Heart left ventricle (tissue), 16 donors: ENCODE measurements at regions of chr1 and their contacts with region 1.

Region 1: GRCh38 chr1:221741711-221742554 is at the start of gene DUSP10:
- DNase-seq: peak; percentile 98 to 99 (median 99)
- ATAC-seq: peak; percentile 95 to 98 (median 97)
- H3K4me3 ChIP-seq: peak within 1 kb of the TSS; percentile 49 to 90 (median 76)
- H3K27ac ChIP-seq: peak within 1 kb of the TSS; percentile 95 to 100 (median 98)
- H3K4me1 ChIP-seq: peaks cover 0 to 37% (median 9%) of the 10 kb centered on the region in 12 donors
- H3K27me3 ChIP-seq: no peaks in the 10 kb centered on the region
- CTCF ChIP-seq: no peak
- POLR2A ChIP-seq: peak in 1 of 2 donors; percentile 82
- total RNA-seq, gene DUSP10: 2.8 to 7.1 (median 4.4) TPM

Region 2: GRCh38 chr1:220873868-220874655 is 867.9 kb before region 1 on chr1:
- intact Hi-C with region 1: loop called in 1 of 10 experiments (anchors 5 kb)
- DNase-seq: peak in 3 of 5 donors; percentile 63 to 72 (median 66)
- ATAC-seq: peak in 3 of 4 donors; percentile 27 to 43 (median 37)
- H3K4me3 ChIP-seq: no peak overlapping the region
- H3K27ac ChIP-seq: peak overlapping the region in 4 of 12 donors; percentile 13 to 97 (median 42)
- H3K4me1 ChIP-seq: peaks cover 0 to 47% (median 29%) of the 10 kb centered on the region in 12 donors
- H3K27me3 ChIP-seq: peaks cover 0 to 7% (median 0%) of the 10 kb centered on the region in 9 donors
- CTCF ChIP-seq: peak; percentile 53 to 87 (median 76)
- POLR2A ChIP-seq: no peak

Region 3: DNA sequence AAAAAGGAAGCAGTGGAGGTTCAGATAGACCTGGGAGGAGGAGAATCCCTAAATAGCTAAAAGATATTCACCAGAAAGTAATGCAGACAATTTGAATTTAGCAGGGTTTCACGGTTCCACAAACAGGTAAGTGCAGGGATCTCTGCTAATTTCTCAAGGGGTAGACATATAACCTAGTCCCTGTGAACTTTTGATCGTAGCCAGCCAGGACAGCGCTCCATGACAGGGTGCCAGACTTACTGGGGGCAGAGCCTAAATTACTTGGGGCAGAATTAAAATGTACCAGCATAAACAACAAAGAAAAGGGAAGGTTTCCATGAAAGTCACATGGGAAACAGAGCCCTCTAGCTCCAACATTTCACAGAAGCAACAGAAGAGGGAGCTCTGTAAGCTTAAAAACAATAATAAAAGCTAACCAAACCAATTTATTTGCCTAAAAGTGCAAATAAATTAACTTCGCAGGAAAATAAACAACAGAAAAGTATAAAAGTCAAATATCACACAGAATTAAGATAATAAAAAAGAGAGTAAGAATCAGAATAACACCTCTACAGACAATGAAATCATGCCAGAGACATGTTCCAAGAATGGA is 198.3 kb before region 1 on chr1:
- intact Hi-C with region 1: loop called in 2 of 10 experiments (anchors 5 to 10 kb)
- DNase-seq: no peak
- ATAC-seq: peak in 1 of 4 donors; percentile 13
- H3K4me3 ChIP-seq: no peak overlapping the region
- H3K27ac ChIP-seq: no peak overlapping the region
- H3K4me1 ChIP-seq: no peaks in the 10 kb centered on the region
- H3K27me3 ChIP-seq: peaks cover 0 to 5% (median 0%) of the 10 kb centered on the region in 9 donors
- CTCF ChIP-seq: peak in 11 of 12 donors; percentile 19 to 64 (median 54)
- POLR2A ChIP-seq: no peak

Region 4: GRCh38 chr1:221557013-221557412 is 184.9 kb before region 1 on chr1:
- intact Hi-C with region 1: loop called in 2 of 10 experiments (anchors 10 kb)
- DNase-seq: no peak
- ATAC-seq: no peak
- H3K4me3 ChIP-seq: no peak overlapping the region
- H3K27ac ChIP-seq: no peak overlapping the region
- H3K4me1 ChIP-seq: peaks cover 0 to 7% (median 0%) of the 10 kb centered on the region in 12 donors
- H3K27me3 ChIP-seq: no peaks in the 10 kb centered on the region
- CTCF ChIP-seq: no peak
- POLR2A ChIP-seq: no peak

Region 5: DNA sequence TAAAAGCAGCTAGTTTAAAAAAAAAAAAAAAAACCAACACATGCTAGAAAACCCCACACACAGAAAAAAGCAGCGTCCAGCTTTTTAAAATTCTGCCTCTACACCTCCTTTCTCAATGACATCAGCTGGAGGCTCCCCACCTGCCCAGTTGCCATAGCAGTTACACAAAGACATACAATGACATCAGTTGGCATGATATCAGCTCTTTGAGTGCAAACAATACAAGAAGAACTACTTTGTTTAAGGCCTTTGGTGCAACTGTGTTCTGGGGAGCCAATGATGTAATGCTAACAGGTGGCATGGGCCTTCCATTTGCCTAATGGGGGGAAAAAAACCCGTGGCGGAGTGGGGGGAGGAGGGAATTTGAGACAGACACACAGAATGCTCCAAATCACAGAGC is 32.9 kb before region 1 on chr1:
- intact Hi-C with region 1: no loop called
- DNase-seq: peak in 4 of 5 donors; percentile 26 to 52 (median 30)
- ATAC-seq: peak; percentile 70 to 89 (median 84)
- H3K4me3 ChIP-seq: no peak overlapping the region
- H3K27ac ChIP-seq: peak overlapping the region in 4 of 12 donors; percentile 10 to 80 (median 54)
- H3K4me1 ChIP-seq: peaks cover 0 to 88% (median 13%) of the 10 kb centered on the region in 12 donors
- H3K27me3 ChIP-seq: no peaks in the 10 kb centered on the region
- CTCF ChIP-seq: no peak
- POLR2A ChIP-seq: no peak

Region 6: DNA sequence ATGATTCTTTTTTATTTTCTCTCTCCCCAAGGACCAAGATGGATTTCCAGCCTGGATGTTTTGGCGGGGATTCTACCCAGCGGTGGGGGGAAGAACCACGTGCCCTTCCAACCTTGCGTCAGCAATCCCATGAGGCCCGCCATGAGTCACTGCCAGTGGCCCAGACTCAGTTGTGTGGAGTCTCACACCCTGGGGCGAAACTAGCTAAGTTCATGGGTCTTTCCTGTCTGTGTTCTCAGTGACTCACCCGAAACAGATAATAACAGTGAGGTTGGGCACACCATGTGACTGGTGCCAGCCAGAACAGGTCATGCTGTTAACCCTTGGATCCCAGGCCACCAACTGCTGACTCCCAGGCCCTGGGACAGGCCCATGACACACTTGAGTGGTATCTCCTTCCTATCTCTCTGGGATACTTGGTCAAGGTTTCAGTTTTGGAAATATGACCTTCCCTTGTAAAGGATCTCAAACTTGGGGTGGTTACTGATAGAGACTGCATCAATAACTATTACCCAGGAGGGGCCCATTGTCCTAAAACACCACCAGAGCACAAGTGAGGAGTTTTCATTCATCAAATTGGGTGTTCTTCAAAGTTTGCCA is 98.0 kb after region 1 on chr1:
- intact Hi-C with region 1: loop called in 1 of 10 experiments (anchors 10 kb)
- DNase-seq: peak in 3 of 5 donors; percentile 18 to 82 (median 78)
- ATAC-seq: peak; percentile 66 to 88 (median 80)
- H3K4me3 ChIP-seq: no peak overlapping the region
- H3K27ac ChIP-seq: peak overlapping the region in 5 of 12 donors; percentile 16 to 59 (median 37)
- H3K4me1 ChIP-seq: peaks cover 0 to 13% (median 0%) of the 10 kb centered on the region in 12 donors
- H3K27me3 ChIP-seq: no peaks in the 10 kb centered on the region
- CTCF ChIP-seq: no peak
- POLR2A ChIP-seq: no peak

Region 7: GRCh38 chr1:222048094-222048595 is 306.2 kb after region 1 on chr1:
- intact Hi-C with region 1: loop called in 2 of 10 experiments (anchors 5 to 10 kb)
- DNase-seq: no peak
- ATAC-seq: no peak
- H3K4me3 ChIP-seq: no peak overlapping the region
- H3K27ac ChIP-seq: no peak overlapping the region
- H3K4me1 ChIP-seq: peaks cover 0 to 15% (median 10%) of the 10 kb centered on the region in 12 donors
- H3K27me3 ChIP-seq: no peaks in the 10 kb centered on the region
- CTCF ChIP-seq: no peak
- POLR2A ChIP-seq: no peak

Region 8: GRCh38 chr1:222301652-222302051 is 559.7 kb after region 1 on chr1:
- intact Hi-C with region 1: no loop called
- DNase-seq: no peak
- ATAC-seq: no peak
- H3K4me3 ChIP-seq: no peak overlapping the region
- H3K27ac ChIP-seq: no peak overlapping the region
- H3K4me1 ChIP-seq: no peaks in the 10 kb centered on the region
- H3K27me3 ChIP-seq: no peaks in the 10 kb centered on the region
- CTCF ChIP-seq: no peak
- POLR2A ChIP-seq: no peak

Region 9: GRCh38 chr1:222455188-222455879 is 713.4 kb after region 1 on chr1:
- intact Hi-C with region 1: loop called in 3 of 10 experiments (anchors 10 kb)
- DNase-seq: peak; percentile 81 to 86 (median 85)
- ATAC-seq: peak; percentile 90 to 98 (median 94)
- H3K4me3 ChIP-seq: peak overlapping the region in 6 of 12 donors; percentile 0 to 27 (median 14)
- H3K27ac ChIP-seq: peak overlapping the region in 2 of 12 donors; percentile 5 to 30
- H3K4me1 ChIP-seq: peaks cover 0 to 12% (median 5%) of the 10 kb centered on the region in 12 donors
- H3K27me3 ChIP-seq: peaks cover 0 to 2% (median 0%) of the 10 kb centered on the region in 9 donors
- CTCF ChIP-seq: peak; percentile 86 to 97 (median 92)
- POLR2A ChIP-seq: no peak